Activated CD8-positive, alpha-beta T cell treated with anti-CD3 and anti-CD28 coated beads for 36 hours (primary cell): ENCODE measurements at regions of chr19 and their contacts with region 1.

Region 1: DNA sequence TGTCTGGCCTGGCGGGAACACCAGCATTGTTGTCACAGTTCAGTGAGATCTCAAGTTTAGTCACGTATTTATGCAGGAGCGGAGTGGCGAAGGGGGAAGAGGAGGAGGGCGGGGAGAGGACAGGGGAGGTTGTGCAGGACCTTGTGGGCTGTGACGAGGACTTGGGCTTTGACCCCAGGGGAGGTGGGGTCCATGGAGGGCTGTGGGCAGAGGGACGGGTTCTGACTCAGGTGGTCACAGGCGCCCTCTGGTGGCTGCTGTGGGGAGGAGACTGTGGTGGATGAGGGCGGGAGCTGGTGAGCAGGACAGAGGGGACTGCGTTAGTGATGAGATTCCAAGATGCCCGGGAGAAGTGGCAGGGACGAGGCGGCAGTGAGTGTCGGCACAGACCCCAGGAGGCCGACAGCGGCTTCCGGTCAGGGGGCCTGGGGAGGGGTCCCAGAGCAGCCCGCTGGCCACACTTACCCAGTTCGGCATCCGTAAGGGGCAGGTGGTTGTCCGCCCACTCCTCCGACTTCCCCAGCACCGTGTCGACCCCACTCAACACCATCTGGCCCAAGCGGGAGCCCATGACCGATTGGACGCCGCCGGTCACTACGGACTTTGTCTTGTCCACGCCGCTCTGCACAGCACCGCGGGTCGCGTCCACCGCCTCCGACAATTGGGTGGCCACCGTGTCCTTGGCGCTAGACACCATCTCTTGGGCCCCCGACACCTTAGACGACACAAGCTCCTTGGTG is 15.7 kb downstream of the PLIN3 start:
- DNase-seq: peak; percentile 86
- ATAC-seq: peak; percentile 96
- H3K4me3 Mint-ChIP-seq: no peak overlapping the region
- H3K27ac Mint-ChIP-seq: no peak overlapping the region
- H3K4me1 Mint-ChIP-seq: peaks cover 3% of the 10 kb centered on the region
- H3K27me3 Mint-ChIP-seq: no peaks in the 10 kb centered on the region
- CTCF ChIP-seq: peak; percentile 90

Region 2: GRCh38 chr19:4624733-4625362 is 226.9 kb before region 1 on chr19:
- CTCF ChIA-PET with region 1: no interaction called
- POLR2A ChIA-PET with region 1: no interaction called
- intact Hi-C with region 1: no loop called
- DNase-seq: no peak
- ATAC-seq: no peak
- H3K4me3 Mint-ChIP-seq: no peak overlapping the region
- H3K27ac Mint-ChIP-seq: no peak overlapping the region
- H3K4me1 Mint-ChIP-seq: no peaks in the 10 kb centered on the region
- H3K27me3 Mint-ChIP-seq: peaks cover 8% of the 10 kb centered on the region
- CTCF ChIP-seq: no peak

Region 3: DNA sequence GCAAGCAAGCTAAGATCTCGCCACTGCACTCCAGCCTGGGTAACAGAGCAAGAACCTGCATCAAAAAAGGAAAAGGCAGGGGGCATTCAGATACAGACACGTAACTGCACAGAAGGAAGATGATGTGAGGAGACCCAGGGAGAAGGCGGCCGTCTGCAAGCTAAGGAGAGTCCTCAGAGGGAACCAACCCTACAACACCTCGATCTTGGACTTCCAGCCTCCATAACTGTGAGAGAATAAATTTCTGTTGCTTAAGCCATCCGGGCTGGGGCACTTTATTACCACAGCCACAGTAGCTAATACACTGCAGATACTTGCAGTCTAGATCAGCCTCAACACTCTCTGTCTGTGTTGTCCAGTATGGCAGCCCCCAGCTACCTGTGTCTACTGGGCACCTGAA is 28.1 kb before region 1 on chr19:
- CTCF ChIA-PET with region 1: interaction called, 15 read pairs
- POLR2A ChIA-PET with region 1: no interaction called
- intact Hi-C with region 1: no loop called
- DNase-seq: no peak
- ATAC-seq: no peak
- H3K4me3 Mint-ChIP-seq: no peak overlapping the region
- H3K27ac Mint-ChIP-seq: no peak overlapping the region
- H3K4me1 Mint-ChIP-seq: peaks cover 1% of the 10 kb centered on the region
- H3K27me3 Mint-ChIP-seq: no peaks in the 10 kb centered on the region
- CTCF ChIP-seq: no peak

Region 4: GRCh38 chr19:4831304-4831978 is 20.3 kb before region 1 on chr19 and contains the start of gene TICAM1:
- CTCF ChIA-PET with region 1: interaction called, 11 read pairs
- POLR2A ChIA-PET with region 1: interaction called, 3 read pairs
- intact Hi-C with region 1: no loop called
- DNase-seq: peak; percentile 77
- ATAC-seq: peak; percentile 84
- H3K4me3 Mint-ChIP-seq: peak within 1 kb of the TSS; percentile 88
- H3K27ac Mint-ChIP-seq: peak within 1 kb of the TSS; percentile 92
- H3K4me1 Mint-ChIP-seq: peaks cover 20% of the 10 kb centered on the region
- H3K27me3 Mint-ChIP-seq: no peaks in the 10 kb centered on the region
- CTCF ChIP-seq: no peak
- total RNA-seq, gene TICAM1: 17.4 to 17.5 TPM